OCI-LY7 (cell line): ENCODE measurements at regions of chr16 and their contacts with region 1.

Region 1: DNA sequence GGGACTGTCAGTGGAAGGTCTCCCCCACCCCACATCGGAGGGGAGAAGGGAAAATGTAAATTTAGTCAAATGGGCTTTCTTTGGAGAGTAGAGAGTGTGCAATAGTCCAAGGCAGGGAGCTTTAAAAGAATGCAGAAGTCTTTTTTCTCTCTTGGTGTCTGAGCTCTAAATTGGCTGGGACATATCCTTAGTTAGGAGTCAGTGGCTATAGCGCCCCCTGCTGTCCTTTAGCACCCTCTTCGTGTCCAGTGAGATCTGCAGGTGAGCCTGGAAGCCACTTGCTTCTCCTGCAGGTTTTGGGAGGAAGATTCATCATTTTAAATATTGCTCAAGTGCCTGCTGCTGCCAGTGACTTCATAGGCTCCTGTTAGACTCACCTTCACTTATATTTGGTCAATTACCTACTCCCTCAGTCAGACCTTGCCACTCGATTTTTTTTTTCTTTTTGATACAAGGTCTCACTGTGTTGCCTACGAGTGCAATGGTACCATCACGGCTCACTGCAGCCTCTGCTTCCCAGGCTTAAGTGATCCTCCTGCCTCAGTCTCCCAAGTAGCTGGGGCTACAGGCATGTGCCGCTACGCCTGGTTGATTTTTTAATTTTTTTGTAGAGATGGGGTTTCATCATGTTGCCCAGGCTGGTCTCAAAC is 174.8 kb downstream of the PRKCB start:
- DNase-seq: peak; percentile 91
- H3K4me3 ChIP-seq: no peak overlapping the region
- H3K27ac ChIP-seq: no peak overlapping the region
- H3K4me1 ChIP-seq: peaks cover 58% of the 10 kb centered on the region
- CTCF ChIP-seq: peak; percentile 96

Region 2: GRCh38 chr16:23835390-23836077 is 175.0 kb before region 1 on chr16 and contains the start of gene PRKCB:
- CTCF ChIA-PET with region 1: no interaction called
- POLR2A ChIA-PET with region 1: no interaction called
- intact Hi-C with region 1: loop called (anchors 1 kb)
- DNase-seq: peak; percentile 92
- H3K4me3 ChIP-seq: peak within 1 kb of the TSS; percentile 85
- H3K27ac ChIP-seq: peak within 1 kb of the TSS; percentile 18
- H3K4me1 ChIP-seq: peaks cover 46% of the 10 kb centered on the region
- CTCF ChIP-seq: no peak
- total RNA-seq, gene PRKCB: 21.0 and 24.2 TPM in 2 replicates

Region 3: DNA sequence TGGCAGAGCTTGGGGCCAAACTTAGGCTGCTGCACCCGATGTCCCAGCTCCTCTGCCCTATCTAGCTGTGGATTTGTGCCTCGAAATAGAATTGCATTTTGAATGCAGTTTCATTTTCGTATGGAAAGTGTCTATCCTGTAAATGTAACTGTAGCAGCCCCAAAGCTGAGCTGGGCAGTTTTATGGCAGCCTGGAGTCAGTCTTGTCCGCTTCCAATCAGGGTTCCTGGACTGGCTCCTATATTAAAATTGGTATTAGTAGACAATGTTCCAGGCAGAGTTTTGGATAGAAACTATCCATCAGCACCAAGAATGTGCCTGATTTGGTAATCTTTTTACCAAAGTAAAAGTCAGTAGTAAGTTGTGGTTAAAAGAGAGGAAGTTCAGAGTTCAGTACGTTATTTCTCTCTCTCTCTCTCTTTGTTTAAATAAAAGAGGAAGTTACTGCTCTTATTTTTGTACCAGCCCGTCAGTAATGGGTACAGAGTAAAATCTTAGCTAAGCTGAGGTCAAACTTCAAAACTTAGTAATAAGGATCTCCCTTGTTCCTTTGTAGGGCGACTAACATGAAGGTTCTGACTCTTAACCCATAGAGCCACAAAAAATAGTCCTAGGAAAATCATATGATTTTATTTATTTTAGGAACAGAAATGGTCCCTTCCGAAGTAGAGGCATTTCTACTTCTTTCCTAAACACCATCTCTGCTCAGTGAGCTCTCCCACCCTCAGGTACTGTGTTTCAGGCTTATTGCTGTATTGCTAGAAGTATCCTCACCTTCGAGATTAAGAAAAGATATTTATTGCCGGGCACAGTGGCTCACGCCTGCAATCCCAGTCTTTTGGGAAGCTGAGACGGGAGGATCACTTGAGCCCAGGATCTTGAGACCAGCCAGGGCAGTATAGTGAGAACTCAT is 146.8 kb before region 1 on chr16:
- CTCF ChIA-PET with region 1: interaction called, 3 read pairs
- POLR2A ChIA-PET with region 1: interaction called, 5 read pairs
- intact Hi-C with region 1: loop called (anchors 5 kb)
- DNase-seq: peak; percentile 86
- H3K4me3 ChIP-seq: peak overlapping the region; percentile 65
- H3K27ac ChIP-seq: peak overlapping the region; percentile 98
- H3K4me1 ChIP-seq: peaks cover 86% of the 10 kb centered on the region
- CTCF ChIP-seq: no peak

Region 4: DNA sequence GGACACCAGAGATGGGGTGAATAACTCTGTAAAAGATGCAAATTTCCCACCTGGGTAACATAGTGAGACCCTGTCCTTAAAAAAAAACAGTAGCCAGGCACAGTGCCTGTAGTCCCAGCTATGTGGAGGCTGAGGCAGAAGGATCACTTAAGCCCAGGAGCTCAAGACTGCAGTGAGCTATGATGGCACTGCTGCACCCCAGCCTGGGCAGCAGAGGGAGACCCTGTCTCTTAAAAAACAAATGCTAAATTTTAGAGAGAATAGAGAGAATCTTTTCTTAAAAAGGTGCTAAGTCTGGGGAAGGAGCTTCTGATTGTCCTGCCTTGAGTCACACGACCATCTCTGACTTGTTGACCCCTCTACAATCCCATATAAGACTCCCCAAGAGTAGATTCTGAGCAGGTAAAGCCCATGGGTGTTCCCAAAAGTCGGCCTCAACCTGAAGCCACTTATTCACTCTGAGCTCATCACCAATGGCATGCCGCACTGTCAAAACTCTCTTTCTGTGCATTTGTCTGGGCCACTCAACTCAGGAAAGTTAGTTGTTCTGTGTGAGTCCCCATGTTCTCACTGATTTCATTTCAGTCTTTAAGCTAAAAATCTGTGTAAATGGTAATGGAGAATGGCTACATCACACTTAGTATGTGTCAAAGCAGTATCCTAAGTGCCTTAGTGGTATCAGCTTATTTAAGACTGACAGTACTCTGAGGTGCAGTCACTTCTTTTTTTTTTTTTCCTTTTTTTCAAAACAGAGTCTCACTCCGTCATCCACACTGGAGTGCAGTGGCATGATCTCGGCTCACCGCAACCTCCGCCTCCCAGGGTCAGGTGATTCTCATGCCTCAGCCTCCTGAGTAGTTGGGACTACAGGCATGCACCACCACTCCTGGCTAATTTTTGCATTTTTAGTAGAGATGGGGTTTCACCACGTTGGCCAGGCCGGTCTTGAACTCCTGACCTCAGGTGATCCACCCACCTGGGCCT is 133.2 kb before region 1 on chr16:
- CTCF ChIA-PET with region 1: interaction called, 6 read pairs
- POLR2A ChIA-PET with region 1: interaction called, 3 read pairs
- intact Hi-C with region 1: loop called (anchors 1 kb)
- DNase-seq: peak; percentile 39
- H3K4me3 ChIP-seq: no peak overlapping the region
- H3K27ac ChIP-seq: no peak overlapping the region
- H3K4me1 ChIP-seq: peaks cover 68% of the 10 kb centered on the region
- CTCF ChIP-seq: peak; percentile 68

Region 5: DNA sequence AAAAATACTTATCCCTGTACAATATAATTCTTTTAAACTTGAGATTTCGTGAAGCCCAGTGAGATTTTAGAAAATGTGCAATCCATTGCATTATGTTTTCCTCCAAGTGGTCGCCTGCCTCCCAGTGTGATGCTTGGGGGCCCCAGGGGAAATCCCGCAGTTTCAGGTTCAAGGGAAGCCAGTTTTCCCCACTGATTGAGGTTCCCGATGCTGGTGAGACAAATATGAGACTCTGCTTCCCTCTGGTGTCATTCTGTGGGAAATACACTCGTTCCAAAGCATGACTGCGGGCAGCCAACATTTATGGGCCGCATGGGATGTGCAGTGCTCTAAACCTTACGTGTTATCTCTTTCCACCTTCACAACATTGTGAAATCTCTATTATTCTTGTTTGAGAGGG is 26.0 kb after region 1 on chr16:
- CTCF ChIA-PET with region 1: no interaction called
- POLR2A ChIA-PET with region 1: no interaction called
- intact Hi-C with region 1: loop called (anchors 2 kb)
- DNase-seq: peak; percentile 55
- H3K4me3 ChIP-seq: no peak overlapping the region
- H3K27ac ChIP-seq: no peak overlapping the region
- H3K4me1 ChIP-seq: no peaks in the 10 kb centered on the region
- CTCF ChIP-seq: peak; percentile 81